ENCODE measurements at regions of chr9 and their contacts with region 1.

Region 1: DNA sequence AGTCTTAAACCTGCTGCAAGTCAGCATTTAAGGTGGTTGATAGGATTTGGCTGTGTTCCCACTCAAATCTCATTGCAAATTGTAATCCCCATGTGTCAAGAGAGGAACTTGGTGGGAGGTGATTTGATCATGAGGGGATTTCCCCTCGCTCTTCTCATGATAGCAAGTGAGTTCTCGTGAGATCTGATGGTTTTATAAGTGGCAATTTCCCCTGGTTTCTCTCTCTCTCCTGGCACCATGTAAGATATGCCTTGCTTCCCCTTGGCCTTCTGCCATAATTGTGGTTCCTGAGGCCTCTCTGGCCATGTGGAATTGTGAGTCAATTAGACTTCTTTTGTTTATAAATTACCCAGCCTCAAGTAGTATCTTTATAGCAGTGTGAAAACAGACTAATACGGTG is 84.3 kb upstream of the SMC2 start:
- DNase-seq: no peak
- ATAC-seq: no peak
- H3K4me3 ChIP-seq: no peak overlapping the region
- H3K4me3 Mint-ChIP-seq: no peak overlapping the region
- H3K27ac ChIP-seq: no peak overlapping the region
- H3K27ac Mint-ChIP-seq: no peak overlapping the region
- H3K4me1 ChIP-seq: no peaks in the 10 kb centered on the region
- H3K4me1 Mint-ChIP-seq: peaks cover 0 to 3% (median 0%) of the 10 kb centered on the region in 7 donors
- H3K27me3 ChIP-seq: peaks cover 0 to 3% of the 10 kb centered on the region in 2 donors
- H3K27me3 Mint-ChIP-seq: peaks cover 0 to 13% (median 9%) of the 10 kb centered on the region in 5 donors

Region 2: DNA sequence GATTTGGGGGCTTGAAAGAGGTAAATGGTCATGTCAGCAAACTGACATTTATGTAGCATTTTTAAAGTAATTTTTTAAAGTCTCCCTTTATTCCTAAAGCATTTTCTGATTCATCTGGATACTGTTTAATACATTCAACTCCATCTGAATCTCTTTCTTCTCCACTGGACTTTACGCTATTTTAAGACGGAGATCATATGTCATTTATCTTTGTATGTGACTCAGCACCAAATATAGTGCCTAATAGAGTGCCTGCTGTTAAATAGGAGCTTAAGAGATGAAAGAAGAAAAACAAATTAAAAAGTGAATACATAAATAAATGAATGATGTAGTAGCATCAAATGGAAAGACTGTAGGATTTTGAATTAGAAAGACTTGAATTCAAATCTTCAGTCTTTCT is 464.6 kb before region 1 on chr9:
- CTCF ChIA-PET with region 1: no interaction called
- POLR2A ChIA-PET with region 1: no interaction called
- intact Hi-C with region 1: no loop called
- DNase-seq: no peak
- ATAC-seq: no peak
- H3K4me3 ChIP-seq: no peak overlapping the region
- H3K4me3 Mint-ChIP-seq: no peak overlapping the region
- H3K27ac ChIP-seq: no peak overlapping the region
- H3K27ac Mint-ChIP-seq: no peak overlapping the region
- H3K4me1 ChIP-seq: no peaks in the 10 kb centered on the region
- H3K4me1 Mint-ChIP-seq: no peaks in the 10 kb centered on the region
- H3K27me3 ChIP-seq: no peaks in the 10 kb centered on the region
- H3K27me3 Mint-ChIP-seq: no peaks in the 10 kb centered on the region

Region 3: GRCh38 chr9:104121022-104121421 is 111.2 kb after region 1 on chr9:
- CTCF ChIA-PET with region 1: interaction called, 3 read pairs
- POLR2A ChIA-PET with region 1: interaction called, 15 read pairs
- intact Hi-C with region 1: no loop called
- DNase-seq: no peak
- ATAC-seq: no peak
- H3K4me3 ChIP-seq: no peak overlapping the region
- H3K4me3 Mint-ChIP-seq: no peak overlapping the region
- H3K27ac ChIP-seq: no peak overlapping the region
- H3K27ac Mint-ChIP-seq: no peak overlapping the region
- H3K4me1 ChIP-seq: no peaks in the 10 kb centered on the region
- H3K4me1 Mint-ChIP-seq: no peaks in the 10 kb centered on the region
- H3K27me3 ChIP-seq: no peaks in the 10 kb centered on the region
- H3K27me3 Mint-ChIP-seq: no peaks in the 10 kb centered on the region